Caco-2 (cell line): ENCODE measurements at regions of chr9 and their contacts with region 1.

Region 1: DNA sequence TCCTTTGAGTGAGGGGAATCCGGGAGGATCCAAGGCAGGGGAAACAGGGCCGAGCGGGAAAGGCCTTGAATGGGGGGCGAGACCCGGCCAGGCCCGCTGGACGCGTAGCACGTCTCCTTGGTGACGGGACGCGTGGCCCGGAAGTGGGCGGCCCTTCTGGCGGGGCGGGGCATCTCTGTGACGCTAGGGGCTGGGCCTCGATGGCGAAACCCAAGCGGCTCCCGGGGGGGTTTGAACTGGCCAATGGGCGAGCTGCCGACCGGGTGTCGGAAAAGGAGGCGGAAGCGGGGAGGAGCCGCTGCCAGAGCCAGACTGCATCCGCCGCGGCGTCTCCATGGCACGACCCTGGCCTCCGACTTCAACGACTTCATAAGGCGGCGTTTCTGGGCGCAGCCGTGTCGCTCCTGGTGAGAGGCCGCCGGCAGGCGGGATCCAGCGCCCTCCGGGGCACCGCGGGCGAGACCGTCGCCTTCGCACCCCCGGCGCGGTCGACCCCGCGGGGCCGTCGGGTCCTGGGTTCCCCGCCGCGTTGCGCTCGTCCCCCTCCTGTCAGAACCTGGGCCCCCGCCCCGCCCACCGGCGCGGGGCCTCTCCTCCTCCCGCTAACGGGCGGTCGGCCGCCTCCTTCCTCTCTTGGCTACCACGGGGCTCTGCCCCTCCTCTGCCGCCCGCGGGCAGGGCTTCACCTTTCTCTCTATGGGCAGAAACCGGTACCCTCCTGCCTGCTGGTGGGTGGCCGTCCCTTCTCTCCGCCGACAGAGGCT is at the start of gene ODF2:
- DNase-seq: peak; percentile 98 to 99
- H3K4me3 ChIP-seq: peak within 1 kb of the TSS; percentile 93
- H3K4me3 Mint-ChIP-seq: peak within 1 kb of the TSS; percentile 100
- H3K27ac Mint-ChIP-seq: peak within 1 kb of the TSS; percentile 94
- H3K4me1 ChIP-seq: 0 out of 2 replicates have a peak, but pooled peaks cover 6% of the 10 kb centered on the region
- H3K4me1 Mint-ChIP-seq: peaks cover 7% of the 10 kb centered on the region
- H3K27me3 ChIP-seq: no peaks in the 10 kb centered on the region
- H3K27me3 Mint-ChIP-seq: peaks cover 3% of the 10 kb centered on the region
- CTCF ChIP-seq: no peak
- total RNA-seq, gene ODF2: 34.6 and 34.9 TPM in 2 replicates

Region 2: GRCh38 chr9:127370672-127371648 is 1085.1 kb before region 1 on chr9:
- CTCF ChIA-PET with region 1: no interaction called
- POLR2A ChIA-PET with region 1: no interaction called
- intact Hi-C with region 1: no loop called
- DNase-seq: peak; percentile 21 to 36
- H3K4me3 ChIP-seq: no peak overlapping the region
- H3K4me3 Mint-ChIP-seq: peak overlapping the region; percentile 43
- H3K27ac Mint-ChIP-seq: peak overlapping the region; percentile 82
- H3K4me1 ChIP-seq: peaks cover 16% of the 10 kb centered on the region
- H3K4me1 Mint-ChIP-seq: peaks cover 25% of the 10 kb centered on the region
- H3K27me3 ChIP-seq: no peaks in the 10 kb centered on the region
- H3K27me3 Mint-ChIP-seq: no peaks in the 10 kb centered on the region
- CTCF ChIP-seq: no peak

Region 3: GRCh38 chr9:128259156-128259555 is 196.9 kb before region 1 on chr9:
- CTCF ChIA-PET with region 1: interaction called, 13 read pairs
- POLR2A ChIA-PET with region 1: no interaction called
- intact Hi-C with region 1: no loop called
- DNase-seq: peak in 1 of 2 experiments; percentile 48
- H3K4me3 ChIP-seq: no peak overlapping the region
- H3K4me3 Mint-ChIP-seq: no peak overlapping the region
- H3K27ac Mint-ChIP-seq: no peak overlapping the region
- H3K4me1 ChIP-seq: no peaks in the 10 kb centered on the region
- H3K4me1 Mint-ChIP-seq: no peaks in the 10 kb centered on the region
- H3K27me3 ChIP-seq: no peaks in the 10 kb centered on the region
- H3K27me3 Mint-ChIP-seq: no peaks in the 10 kb centered on the region
- CTCF ChIP-seq: peak in 1 of 2 experiments; percentile 40

Region 4: GRCh38 chr9:128438343-128439109 is 17.5 kb before region 1 on chr9:
- CTCF ChIA-PET with region 1: interaction called, 3 read pairs
- POLR2A ChIA-PET with region 1: interaction called, 10 read pairs
- intact Hi-C with region 1: no loop called
- DNase-seq: peak; percentile 82 to 88
- H3K4me3 ChIP-seq: no peak overlapping the region
- H3K4me3 Mint-ChIP-seq: no peak overlapping the region
- H3K27ac Mint-ChIP-seq: no peak overlapping the region
- H3K4me1 ChIP-seq: no peaks in the 10 kb centered on the region
- H3K4me1 Mint-ChIP-seq: no peaks in the 10 kb centered on the region
- H3K27me3 ChIP-seq: no peaks in the 10 kb centered on the region
- H3K27me3 Mint-ChIP-seq: no peaks in the 10 kb centered on the region
- CTCF ChIP-seq: peak; percentile 93 to 94

Region 5: DNA sequence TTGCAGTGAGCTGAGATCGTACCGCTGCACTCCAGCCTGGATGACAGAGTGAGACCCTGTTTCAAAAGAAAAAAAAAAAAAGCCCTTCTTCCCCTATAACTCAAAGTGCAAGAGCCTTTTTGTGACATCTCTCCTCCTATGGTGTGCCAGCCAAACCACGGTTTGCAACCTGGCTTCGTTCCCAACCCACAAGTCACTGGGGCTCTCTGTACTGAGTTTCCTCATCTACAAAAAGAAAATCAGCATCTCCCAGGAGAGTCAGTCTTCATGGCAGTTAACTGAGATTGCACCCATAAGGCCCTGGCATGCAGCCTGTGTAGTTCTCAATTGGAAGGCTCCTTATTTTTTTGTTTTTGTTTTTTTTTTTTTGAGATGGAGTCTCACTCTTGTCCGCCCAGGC is 14.5 kb after region 1 on chr9:
- CTCF ChIA-PET with region 1: no interaction called
- POLR2A ChIA-PET with region 1: no interaction called
- intact Hi-C with region 1: no loop called
- DNase-seq: no peak
- H3K4me3 ChIP-seq: no peak overlapping the region
- H3K4me3 Mint-ChIP-seq: no peak overlapping the region
- H3K27ac Mint-ChIP-seq: no peak overlapping the region
- H3K4me1 ChIP-seq: no peaks in the 10 kb centered on the region
- H3K4me1 Mint-ChIP-seq: no peaks in the 10 kb centered on the region
- H3K27me3 ChIP-seq: no peaks in the 10 kb centered on the region
- H3K27me3 Mint-ChIP-seq: no peaks in the 10 kb centered on the region
- CTCF ChIP-seq: no peak

Region 6: DNA sequence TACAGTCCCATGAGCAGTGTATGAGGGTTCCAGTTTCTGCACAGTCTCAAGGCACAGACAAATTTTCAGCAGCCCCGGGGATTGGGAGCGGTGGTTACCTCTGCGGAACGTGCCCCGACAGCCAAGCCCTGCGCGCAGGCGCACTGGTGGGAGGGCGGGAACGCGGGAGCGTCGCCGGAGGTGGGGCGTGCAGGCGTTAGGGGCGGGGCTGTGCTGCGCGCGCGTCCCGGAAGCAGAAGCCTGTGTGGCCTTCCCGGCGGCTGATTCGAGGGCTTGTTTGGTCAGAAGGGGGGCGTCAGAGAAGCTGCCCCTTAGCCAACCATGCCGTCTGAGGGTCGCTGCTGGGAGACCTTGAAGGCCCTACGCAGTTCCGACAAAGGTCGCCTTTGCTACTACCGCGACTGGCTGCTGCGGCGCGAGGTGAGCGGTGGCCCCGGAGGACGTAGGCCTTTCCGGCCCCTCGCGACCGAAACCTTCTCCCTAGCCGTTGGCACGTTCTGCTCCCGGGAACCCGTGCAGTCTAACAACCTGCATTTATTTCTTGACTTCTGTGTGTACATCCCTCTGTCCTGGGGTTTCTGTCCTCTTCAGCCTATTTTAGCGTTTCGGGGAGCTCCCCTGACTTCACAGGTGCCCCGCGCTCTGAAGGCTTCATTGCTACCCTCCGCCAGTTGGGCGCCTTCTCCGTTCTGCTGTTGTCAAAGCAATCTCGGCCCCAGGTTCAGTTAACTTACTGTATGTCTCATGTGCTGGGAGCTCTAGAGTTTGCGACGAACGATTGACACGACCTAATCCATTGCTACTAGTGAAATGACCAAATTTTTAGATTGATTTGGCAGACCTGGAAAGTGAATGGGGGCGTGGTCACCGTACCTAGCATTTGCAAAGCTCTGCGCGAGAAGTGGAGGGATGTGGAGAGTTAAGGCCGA is 48.7 kb after region 1 on chr9 and contains the start of gene GLE1:
- CTCF ChIA-PET with region 1: interaction called, 3 read pairs
- POLR2A ChIA-PET with region 1: no interaction called
- intact Hi-C with region 1: loop called (anchors 2 kb)
- DNase-seq: peak; percentile 94 to 97
- H3K4me3 ChIP-seq: peak within 1 kb of the TSS; percentile 99
- H3K4me3 Mint-ChIP-seq: peak within 1 kb of the TSS; percentile 96
- H3K27ac Mint-ChIP-seq: peak within 1 kb of the TSS; percentile 97
- H3K4me1 ChIP-seq: peaks cover 16% of the 10 kb centered on the region
- H3K4me1 Mint-ChIP-seq: no peaks in the 10 kb centered on the region
- H3K27me3 ChIP-seq: no peaks in the 10 kb centered on the region
- H3K27me3 Mint-ChIP-seq: no peaks in the 10 kb centered on the region
- CTCF ChIP-seq: no peak
- total RNA-seq, gene GLE1: 30.4 and 30.8 TPM in 2 replicates

Region 7: GRCh38 chr9:128558431-128559310 is 102.6 kb after region 1 on chr9:
- CTCF ChIA-PET with region 1: no interaction called
- POLR2A ChIA-PET with region 1: no interaction called
- intact Hi-C with region 1: loop called (anchors 2 kb)
- DNase-seq: peak; percentile 76 to 84
- H3K4me3 ChIP-seq: no peak overlapping the region
- H3K4me3 Mint-ChIP-seq: peak overlapping the region; percentile 57
- H3K27ac Mint-ChIP-seq: peak overlapping the region; percentile 85
- H3K4me1 ChIP-seq: peaks cover 53% of the 10 kb centered on the region
- H3K4me1 Mint-ChIP-seq: peaks cover 23% of the 10 kb centered on the region
- H3K27me3 ChIP-seq: no peaks in the 10 kb centered on the region
- H3K27me3 Mint-ChIP-seq: no peaks in the 10 kb centered on the region
- CTCF ChIP-seq: no peak